ENCODE measurements at regions of chr9 and their contacts with region 1.

Region 1: GRCh38 chr9:129737479-129738274 is 15.2 kb downstream of the PTGES start:
- DNase-seq: peak; percentile 84
- H3K4me3 Mint-ChIP-seq: no peak overlapping the region
- H3K27ac Mint-ChIP-seq: no peak overlapping the region
- H3K4me1 Mint-ChIP-seq: peaks cover 26% of the 10 kb centered on the region
- H3K27me3 Mint-ChIP-seq: no peaks in the 10 kb centered on the region
- CTCF ChIP-seq: peak; percentile 95

Region 2: DNA sequence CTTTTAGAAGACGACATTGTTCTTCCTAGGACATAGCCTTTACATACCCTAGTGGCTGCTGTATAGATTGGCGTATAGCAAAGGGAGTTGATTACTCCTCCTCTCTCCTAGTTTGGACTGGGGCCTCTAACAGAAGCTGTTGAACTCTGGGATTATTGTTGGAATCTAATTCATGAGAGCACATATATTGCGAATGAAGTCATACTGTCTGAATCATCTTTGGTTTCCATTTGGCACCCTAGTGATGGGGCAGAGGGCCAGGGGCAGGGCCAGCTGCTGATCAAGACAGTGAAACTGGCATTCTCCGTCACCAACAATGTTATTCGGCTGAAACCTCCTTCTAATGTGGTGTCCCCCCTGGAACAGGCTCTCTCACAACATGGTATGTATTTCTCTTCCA is 749.9 kb before region 1 on chr9:
- CTCF ChIA-PET with region 1: no interaction called
- POLR2A ChIA-PET with region 1: no interaction called
- intact Hi-C with region 1: no loop called
- DNase-seq: peak; percentile 72
- H3K4me3 Mint-ChIP-seq: peak overlapping the region; percentile 33
- H3K27ac Mint-ChIP-seq: peak overlapping the region; percentile 67
- H3K4me1 Mint-ChIP-seq: peaks cover 18% of the 10 kb centered on the region
- H3K27me3 Mint-ChIP-seq: no peaks in the 10 kb centered on the region
- CTCF ChIP-seq: no peak

Region 3: GRCh38 chr9:129641746-129642513 is 95.7 kb before region 1 on chr9 and contains the start of gene ASB6:
- CTCF ChIA-PET with region 1: interaction called, 6 read pairs
- POLR2A ChIA-PET with region 1: interaction called, 8 read pairs
- intact Hi-C with region 1: loop called (anchors 1 kb)
- DNase-seq: peak; percentile 93
- H3K4me3 Mint-ChIP-seq: peak within 1 kb of the TSS; percentile 87
- H3K27ac Mint-ChIP-seq: peak within 1 kb of the TSS; percentile 79
- H3K4me1 Mint-ChIP-seq: peaks cover 12% of the 10 kb centered on the region
- H3K27me3 Mint-ChIP-seq: no peaks in the 10 kb centered on the region
- CTCF ChIP-seq: peak; percentile 97
- total RNA-seq, gene ASB6: 14.4 TPM in 2 replicates

Region 4: GRCh38 chr9:129726322-129727160 is 11.1 kb before region 1 on chr9:
- CTCF ChIA-PET with region 1: interaction called, 34 read pairs
- POLR2A ChIA-PET with region 1: interaction called, 6 read pairs
- intact Hi-C with region 1: no loop called
- DNase-seq: peak; percentile 79
- H3K4me3 Mint-ChIP-seq: no peak overlapping the region
- H3K27ac Mint-ChIP-seq: no peak overlapping the region
- H3K4me1 Mint-ChIP-seq: no peaks in the 10 kb centered on the region
- H3K27me3 Mint-ChIP-seq: no peaks in the 10 kb centered on the region
- CTCF ChIP-seq: peak; percentile 92

Region 5: DNA sequence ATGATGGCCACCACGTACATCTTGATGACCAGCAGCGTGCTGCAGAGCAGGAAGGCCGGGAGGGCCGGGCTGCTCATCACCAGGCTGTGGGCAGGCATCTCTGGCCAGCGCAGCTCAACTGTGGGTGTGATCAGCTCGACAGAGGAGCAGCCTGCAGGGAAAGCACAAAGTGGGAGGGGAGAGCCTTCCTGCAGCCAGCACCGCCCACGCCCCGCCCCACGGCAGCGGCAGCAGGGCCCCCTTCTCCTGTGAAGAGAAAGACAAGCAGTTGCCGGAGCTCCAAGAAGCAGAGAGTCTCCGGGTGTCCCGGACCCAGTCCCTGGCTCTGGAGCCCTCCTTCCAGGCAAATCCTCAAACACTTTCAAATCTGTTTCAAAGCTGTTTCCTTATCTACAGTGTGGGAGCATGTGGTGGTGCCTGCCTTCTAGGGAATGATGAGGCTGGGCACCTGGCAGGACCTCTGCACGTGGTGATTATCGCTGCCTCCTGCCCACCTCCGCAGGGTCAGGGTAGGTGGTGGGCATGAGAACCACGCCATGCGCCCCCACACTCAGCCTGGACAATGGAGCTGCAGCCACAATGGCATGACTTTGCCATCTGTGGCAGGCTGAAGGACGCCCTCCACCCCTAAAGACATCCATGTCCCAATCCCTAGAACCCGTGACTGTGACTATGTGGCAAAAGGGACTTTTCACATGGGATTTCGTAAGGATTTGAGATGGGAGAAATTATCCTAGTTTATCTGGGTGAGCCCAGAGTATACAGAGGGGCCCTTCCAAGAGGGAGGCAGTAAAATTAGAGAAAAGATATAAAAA is 15.4 kb after region 1 on chr9 and contains the start of gene PTGES:
- CTCF ChIA-PET with region 1: interaction called, 55 read pairs
- POLR2A ChIA-PET with region 1: interaction called, 92 read pairs
- intact Hi-C with region 1: no loop called
- DNase-seq: peak; percentile 90
- H3K4me3 Mint-ChIP-seq: peak within 1 kb of the TSS; percentile 93
- H3K27ac Mint-ChIP-seq: peak within 1 kb of the TSS; percentile 82
- H3K4me1 Mint-ChIP-seq: peaks cover 22% of the 10 kb centered on the region
- H3K27me3 Mint-ChIP-seq: no peaks in the 10 kb centered on the region
- CTCF ChIP-seq: no peak
- total RNA-seq, gene PTGES: 74.0 and 96.6 TPM in 2 replicates

Region 6: DNA sequence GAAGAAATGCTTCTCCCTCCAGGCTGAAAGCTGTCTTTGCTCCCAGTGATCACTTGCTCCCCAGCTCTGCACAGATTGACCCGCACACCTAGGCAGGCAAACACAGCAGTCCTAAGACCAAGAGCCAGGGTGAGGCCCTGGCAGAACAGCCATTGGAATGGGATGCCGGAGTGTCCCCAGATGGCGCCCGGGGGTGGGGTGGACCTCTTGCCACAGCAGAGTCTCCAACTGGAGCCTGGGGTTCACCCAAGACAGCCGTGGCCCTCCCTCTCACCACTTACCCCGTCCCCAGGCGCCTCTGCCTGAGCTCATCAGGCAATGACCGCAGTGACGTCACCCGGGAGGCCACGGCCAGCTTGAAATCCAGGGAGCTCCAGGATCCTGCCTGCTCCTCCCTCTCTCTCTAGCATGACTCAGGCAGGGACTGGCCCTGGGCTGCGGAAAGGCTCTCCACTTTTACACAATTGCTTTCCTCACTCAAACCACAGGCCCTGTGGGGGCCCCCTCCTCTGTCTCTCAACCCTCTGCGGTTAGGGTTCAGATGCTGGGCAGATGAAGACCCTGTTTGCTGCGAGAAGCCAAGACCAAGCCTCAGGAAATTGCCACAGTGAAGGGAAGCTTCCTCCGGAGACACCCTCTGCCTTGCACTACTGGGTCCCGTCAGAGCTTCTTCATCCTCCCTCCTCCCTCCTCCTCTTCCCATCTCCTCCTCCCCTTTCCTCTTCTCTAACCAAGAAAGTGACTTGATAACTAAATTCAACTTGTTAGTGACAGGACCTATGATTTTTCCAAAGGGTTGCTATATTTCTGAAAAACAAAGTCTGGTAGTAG is 39.5 kb after region 1 on chr9:
- CTCF ChIA-PET with region 1: interaction called, 145 read pairs
- POLR2A ChIA-PET with region 1: interaction called, 68 read pairs
- intact Hi-C with region 1: no loop called
- DNase-seq: peak; percentile 99
- H3K4me3 Mint-ChIP-seq: peak overlapping the region; percentile 58
- H3K27ac Mint-ChIP-seq: peak overlapping the region; percentile 83
- H3K4me1 Mint-ChIP-seq: peaks cover 50% of the 10 kb centered on the region
- H3K27me3 Mint-ChIP-seq: no peaks in the 10 kb centered on the region
- CTCF ChIP-seq: no peak

Region 7: DNA sequence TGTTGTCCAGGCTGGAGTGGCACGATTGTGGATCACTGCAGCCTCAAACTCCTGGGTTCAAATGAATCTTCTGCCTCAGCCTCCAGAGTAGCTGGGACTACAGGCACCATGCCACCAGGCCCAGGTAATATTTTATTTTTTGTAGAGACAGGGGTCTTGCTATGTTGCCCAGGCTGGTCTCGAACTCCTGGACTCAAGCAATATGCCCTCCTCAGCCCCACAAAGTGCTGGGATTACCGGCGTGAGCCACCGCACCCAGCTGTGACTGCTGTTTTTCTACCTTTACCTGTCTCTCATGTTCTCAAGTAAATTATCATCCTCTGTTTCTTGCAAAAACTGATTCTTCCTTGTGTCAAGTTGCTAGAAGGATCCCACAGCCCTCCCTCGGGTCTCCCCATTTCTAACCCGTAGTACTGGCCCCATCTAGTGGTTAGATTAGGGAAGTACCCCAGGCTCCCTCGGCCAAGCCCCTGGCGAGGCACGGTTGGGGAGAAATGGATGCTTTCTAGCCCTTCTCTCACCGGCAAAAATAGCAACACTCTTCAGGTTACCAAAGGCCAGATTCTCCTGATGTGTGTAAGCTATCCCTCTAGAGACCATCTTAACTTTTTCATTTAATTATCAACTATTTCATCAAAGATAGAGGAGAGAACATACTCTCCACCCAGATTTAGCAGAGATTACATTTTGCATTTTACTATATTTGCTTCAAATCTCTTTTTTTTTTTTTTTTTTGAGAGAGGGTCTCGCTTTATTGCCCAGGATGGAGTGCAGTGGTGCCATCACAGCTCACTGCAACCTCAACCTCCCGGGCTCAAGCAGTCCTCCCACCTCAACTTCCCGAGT is 46.1 kb after region 1 on chr9:
- CTCF ChIA-PET with region 1: interaction called, 145 read pairs
- POLR2A ChIA-PET with region 1: interaction called, 68 read pairs
- intact Hi-C with region 1: loop called (anchors 1 kb)
- DNase-seq: peak; percentile 82
- H3K4me3 Mint-ChIP-seq: no peak overlapping the region
- H3K27ac Mint-ChIP-seq: no peak overlapping the region
- H3K4me1 Mint-ChIP-seq: peaks cover 13% of the 10 kb centered on the region
- H3K27me3 Mint-ChIP-seq: peaks cover 8% of the 10 kb centered on the region
- CTCF ChIP-seq: peak; percentile 95

Region 8: DNA sequence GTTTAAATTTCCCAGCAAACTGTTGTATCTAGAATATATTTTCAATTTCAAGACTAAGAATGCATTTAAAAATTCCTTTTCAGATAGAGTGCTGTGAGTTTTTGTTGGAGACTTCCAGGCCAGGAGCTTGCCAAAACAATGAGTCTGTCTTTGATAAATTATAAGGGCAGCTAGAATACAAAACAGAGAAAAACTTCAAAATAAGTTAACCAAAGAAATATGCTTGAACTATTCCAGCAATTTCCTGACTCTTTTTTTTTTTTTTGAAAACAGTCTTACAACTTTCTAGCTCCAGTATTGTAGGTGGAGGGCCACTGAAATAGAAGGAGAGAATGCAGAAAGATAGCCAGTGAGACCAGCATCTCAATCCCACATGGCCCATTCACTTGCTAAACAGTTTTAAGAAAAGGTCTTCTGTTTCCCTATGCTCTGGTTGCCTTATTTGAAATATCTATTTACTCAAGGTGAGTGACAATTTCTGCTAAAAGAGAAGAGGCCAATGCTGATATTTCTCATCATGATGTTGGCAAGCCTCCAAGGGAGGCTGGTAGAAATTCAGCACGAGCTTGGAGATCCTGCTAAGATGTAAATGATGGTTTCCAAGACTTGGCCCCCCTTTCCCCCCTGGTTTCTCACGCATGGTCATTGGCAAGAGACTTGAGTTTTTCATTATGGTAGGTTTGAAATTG is 200.8 kb after region 1 on chr9:
- CTCF ChIA-PET with region 1: no interaction called
- POLR2A ChIA-PET with region 1: no interaction called
- intact Hi-C with region 1: no loop called
- DNase-seq: no peak
- H3K4me3 Mint-ChIP-seq: no peak overlapping the region
- H3K27ac Mint-ChIP-seq: no peak overlapping the region
- H3K4me1 Mint-ChIP-seq: no peaks in the 10 kb centered on the region
- H3K27me3 Mint-ChIP-seq: no peaks in the 10 kb centered on the region
- CTCF ChIP-seq: no peak

Measured in MCF 10A (cell line).